ENCODE measurements at regions of chr12 and their contacts with region 1.

Region 1: DNA sequence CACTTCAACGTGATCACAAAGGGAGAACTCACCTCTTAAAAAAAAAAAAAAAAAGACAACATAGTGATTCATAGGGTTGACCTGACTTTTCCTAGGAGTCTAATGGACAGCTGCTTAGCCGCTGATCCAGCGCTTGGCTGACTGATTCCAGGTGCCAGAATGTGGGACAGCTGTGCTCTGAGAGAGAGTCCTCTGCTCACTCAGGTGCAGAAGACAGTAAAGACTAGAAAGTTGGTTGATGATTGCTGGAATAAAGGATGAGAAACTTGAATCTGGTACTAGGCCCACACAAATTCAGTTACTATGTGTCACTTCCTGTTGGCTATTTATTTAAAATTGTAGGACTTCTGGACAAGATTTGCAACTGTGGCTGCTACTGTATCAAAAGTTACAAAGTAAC is 229.4 kb downstream of the CHST11 start:
- DNase-seq: peak; percentile 41
- ATAC-seq: no peak
- H3K4me3 ChIP-seq: no peak overlapping the region
- H3K27ac ChIP-seq: no peak overlapping the region
- H3K4me1 ChIP-seq: no peaks in the 10 kb centered on the region
- H3K27me3 ChIP-seq: peaks cover 4% of the 10 kb centered on the region; the same call in 1 of the 2 replicates
- CTCF ChIP-seq: no peak
- POLR2A ChIP-seq: no peak
- RAD21 ChIP-seq: no peak

Region 2: DNA sequence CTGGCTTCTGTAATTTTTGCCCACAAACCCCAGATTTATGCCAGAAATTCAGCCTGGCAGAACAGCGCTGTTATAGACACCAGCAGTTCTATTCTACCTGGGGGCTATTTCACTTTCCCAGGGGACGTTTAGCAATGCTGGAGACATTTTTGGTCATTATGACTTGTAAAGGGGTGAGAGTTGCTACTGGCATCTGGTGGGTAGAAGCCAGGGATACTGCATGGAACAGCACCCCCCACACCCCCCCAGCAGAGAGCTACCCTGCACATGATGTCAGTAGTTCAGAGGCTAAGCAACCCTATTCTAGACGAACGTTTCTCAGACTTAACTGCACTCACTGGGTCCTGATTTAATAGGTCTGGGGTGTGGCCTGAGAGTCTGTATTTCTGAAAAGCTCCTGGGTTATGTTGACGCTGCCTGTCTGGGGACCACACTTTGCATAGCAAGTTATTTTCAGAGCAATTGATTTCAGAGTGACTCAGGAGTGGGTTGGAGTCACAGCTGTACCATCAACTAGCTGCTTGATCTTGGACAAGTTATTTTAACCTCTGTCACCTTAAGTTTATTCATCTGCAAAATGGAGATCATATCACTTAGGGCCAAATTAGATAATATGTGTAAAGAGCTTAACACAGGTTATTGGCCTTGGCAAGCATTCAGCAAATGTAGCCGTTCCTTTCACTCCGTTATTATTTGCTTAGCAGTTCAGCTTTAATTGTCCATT is 180.9 kb before region 1 on chr12:
- CTCF ChIA-PET with region 1: no interaction called
- POLR2A ChIA-PET with region 1: no interaction called
- dilution Hi-C with region 1: no loop called
- in situ Hi-C with region 1: no loop called
- intact Hi-C with region 1: no loop called
- DNase-seq: no peak
- ATAC-seq: no peak
- H3K4me3 ChIP-seq: no peak overlapping the region
- H3K27ac ChIP-seq: no peak overlapping the region
- H3K4me1 ChIP-seq: no peaks in the 10 kb centered on the region
- H3K27me3 ChIP-seq: peaks cover 29% of the 10 kb centered on the region
- CTCF ChIP-seq: no peak
- POLR2A ChIP-seq: no peak
- RAD21 ChIP-seq: no peak

Region 3: GRCh38 chr12:105099356-105099755 is 413.2 kb after region 1 on chr12:
- CTCF ChIA-PET with region 1: no interaction called
- POLR2A ChIA-PET with region 1: no interaction called
- dilution Hi-C with region 1: no loop called
- in situ Hi-C with region 1: no loop called
- intact Hi-C with region 1: loop called (anchors 5 kb)
- DNase-seq: no peak
- ATAC-seq: no peak
- H3K4me3 ChIP-seq: no peak overlapping the region
- H3K27ac ChIP-seq: no peak overlapping the region
- H3K4me1 ChIP-seq: peaks cover 2% of the 10 kb centered on the region; the same call in 1 of the 2 replicates
- H3K27me3 ChIP-seq: no peaks in the 10 kb centered on the region
- CTCF ChIP-seq: no peak
- POLR2A ChIP-seq: no peak
- RAD21 ChIP-seq: no peak